Activated T-helper 2 cell treated with anti-CD3 and anti-CD28 coated beads, Interferon-gamma antibody, Interleukin-2, Interleukin-4, amounts not matched to agents 10 μg/mL and 5 μg/mL and 100 μg/mL, durations not matched to agents 14 hours and 24 hours and 36 hours (primary cell): ENCODE measurements at regions of chr20 and their contacts with region 1.

Region 1: DNA sequence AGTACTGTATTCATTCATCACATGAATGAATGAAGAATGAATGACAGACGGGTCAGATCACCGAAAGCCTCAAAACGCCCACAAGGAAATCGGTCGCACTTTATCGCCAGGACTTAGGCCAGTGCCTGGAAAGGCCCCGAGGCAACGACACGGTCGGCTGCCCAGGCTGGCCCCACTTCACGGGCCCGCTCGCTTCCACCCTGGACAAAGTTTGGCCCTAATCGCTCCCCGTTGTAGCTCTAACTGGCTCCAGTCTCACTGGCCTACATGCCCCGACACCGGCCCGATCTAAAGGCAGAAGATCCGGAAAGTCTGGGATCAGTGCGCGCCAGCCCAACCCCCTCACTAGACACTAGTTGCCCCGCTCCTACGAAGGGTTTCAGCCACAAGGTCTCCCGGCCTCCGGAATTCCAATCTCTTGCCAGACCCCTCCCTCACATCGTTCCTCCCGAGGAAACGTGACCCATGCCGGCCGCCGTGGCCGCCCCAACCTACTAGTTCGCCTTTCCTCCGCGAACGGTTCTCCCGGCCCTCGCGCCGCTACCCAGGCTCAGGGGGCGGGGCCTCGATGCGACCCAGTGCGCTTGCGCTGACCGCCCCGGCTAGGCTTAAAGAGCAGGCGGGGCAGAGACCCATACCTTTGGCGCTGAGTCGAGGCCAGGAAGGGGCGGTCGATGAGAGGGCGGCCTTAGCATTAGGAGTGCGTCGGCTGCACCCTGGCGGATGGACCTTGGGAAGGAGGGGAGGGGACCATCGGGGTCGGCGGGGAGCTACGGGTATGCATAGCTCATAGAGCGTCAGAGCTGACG is at the starts of genes GSS and MYH7B:
- DNase-seq: peak; percentile 96
- H3K4me3 Mint-ChIP-seq: peak within 1 kb of the TSS; percentile 97
- H3K27ac Mint-ChIP-seq: peak within 1 kb of the TSS; percentile 97
- H3K4me1 Mint-ChIP-seq: peaks cover 15% of the 10 kb centered on the region
- H3K27me3 Mint-ChIP-seq: no peaks in the 10 kb centered on the region
- total RNA-seq, gene GSS: 70.5 and 77.1 TPM in 2 replicates
- total RNA-seq, gene MYH7B: 0.30 and 0.34 TPM in 2 replicates

Region 2: GRCh38 chr20:34825530-34826362 is 129.7 kb before region 1 on chr20 and contains the start of gene NCOA6:
- intact Hi-C with region 1: loop called (anchors 2 kb)
- DNase-seq: peak; percentile 72
- H3K4me3 Mint-ChIP-seq: peak within 1 kb of the TSS; percentile 98
- H3K27ac Mint-ChIP-seq: peak within 1 kb of the TSS; percentile 94
- H3K4me1 Mint-ChIP-seq: peaks cover 29% of the 10 kb centered on the region
- H3K27me3 Mint-ChIP-seq: peaks cover 11% of the 10 kb centered on the region
- total RNA-seq, gene NCOA6: 29.1 and 30.9 TPM in 2 replicates

Region 3: DNA sequence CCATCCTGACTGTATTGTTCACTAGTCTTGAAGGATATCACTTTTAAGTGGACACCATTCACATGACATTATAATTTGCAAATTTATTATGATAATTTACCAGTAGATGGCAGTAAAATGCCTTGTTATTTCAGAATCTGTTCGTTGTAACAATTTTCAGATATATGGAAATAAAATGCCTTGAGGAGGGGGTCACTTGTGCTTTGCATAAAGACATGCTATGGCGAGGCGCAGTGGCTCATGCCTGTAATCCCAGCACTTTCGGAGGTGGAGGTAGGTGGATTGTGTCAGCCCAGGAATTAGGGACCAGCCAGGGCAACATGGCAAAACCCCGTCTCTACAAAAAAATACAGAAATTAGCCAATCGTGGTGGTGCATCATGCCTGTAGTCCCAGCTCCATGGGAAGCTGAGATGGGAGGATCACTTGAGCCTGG is 121.0 kb before region 1 on chr20:
- intact Hi-C with region 1: loop called (anchors 2 kb)
- DNase-seq: no peak
- H3K4me3 Mint-ChIP-seq: no peak overlapping the region
- H3K27ac Mint-ChIP-seq: no peak overlapping the region
- H3K4me1 Mint-ChIP-seq: peaks cover 4% of the 10 kb centered on the region
- H3K27me3 Mint-ChIP-seq: peaks cover 22% of the 10 kb centered on the region

Region 4: DNA sequence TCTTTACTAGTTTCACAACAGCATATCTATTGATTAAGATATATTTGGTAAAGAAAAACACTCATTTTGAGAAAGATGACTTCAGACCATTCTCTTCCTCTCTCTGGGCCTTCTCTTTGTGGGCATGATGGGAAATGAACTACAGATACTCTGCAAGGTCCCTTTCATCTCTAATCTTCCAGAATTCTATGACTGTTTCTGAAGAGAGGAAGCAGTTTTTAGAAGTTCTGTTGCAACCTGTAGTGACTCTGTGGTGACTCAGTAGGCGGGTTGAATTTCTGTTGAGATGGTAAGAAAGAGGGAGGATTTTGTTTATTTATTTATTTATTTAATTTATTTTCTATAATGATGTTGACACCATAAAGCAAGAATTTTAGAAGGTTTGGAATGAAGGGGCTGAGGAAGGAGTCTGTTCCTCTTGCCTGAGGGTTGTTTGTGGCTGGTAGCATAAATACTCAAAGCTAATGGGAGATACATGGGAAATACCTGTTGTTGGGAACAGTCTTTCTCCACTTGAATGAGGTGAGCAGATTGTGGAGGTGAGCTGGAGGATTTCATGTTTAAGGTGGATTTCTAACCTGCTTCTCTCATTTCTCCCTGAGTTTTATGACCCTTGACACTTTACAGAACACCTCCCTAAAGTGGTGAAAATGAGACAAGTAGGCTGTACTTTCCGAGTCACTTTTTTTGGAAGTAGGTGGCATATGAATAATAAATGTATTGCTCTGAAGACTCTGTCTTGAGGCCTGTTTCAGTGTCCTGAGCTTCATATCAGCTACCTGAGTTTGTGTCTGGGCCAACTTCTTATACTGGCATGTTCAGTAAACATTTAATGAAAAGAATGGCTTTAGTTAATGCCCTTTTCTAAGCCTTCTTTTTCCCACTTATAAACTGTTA is 64.0 kb before region 1 on chr20:
- intact Hi-C with region 1: loop called (anchors 1 kb)
- DNase-seq: no peak
- H3K4me3 Mint-ChIP-seq: peak overlapping the region; percentile 14
- H3K27ac Mint-ChIP-seq: peak overlapping the region; percentile 80
- H3K4me1 Mint-ChIP-seq: peaks cover 45% of the 10 kb centered on the region
- H3K27me3 Mint-ChIP-seq: no peaks in the 10 kb centered on the region

Region 5: DNA sequence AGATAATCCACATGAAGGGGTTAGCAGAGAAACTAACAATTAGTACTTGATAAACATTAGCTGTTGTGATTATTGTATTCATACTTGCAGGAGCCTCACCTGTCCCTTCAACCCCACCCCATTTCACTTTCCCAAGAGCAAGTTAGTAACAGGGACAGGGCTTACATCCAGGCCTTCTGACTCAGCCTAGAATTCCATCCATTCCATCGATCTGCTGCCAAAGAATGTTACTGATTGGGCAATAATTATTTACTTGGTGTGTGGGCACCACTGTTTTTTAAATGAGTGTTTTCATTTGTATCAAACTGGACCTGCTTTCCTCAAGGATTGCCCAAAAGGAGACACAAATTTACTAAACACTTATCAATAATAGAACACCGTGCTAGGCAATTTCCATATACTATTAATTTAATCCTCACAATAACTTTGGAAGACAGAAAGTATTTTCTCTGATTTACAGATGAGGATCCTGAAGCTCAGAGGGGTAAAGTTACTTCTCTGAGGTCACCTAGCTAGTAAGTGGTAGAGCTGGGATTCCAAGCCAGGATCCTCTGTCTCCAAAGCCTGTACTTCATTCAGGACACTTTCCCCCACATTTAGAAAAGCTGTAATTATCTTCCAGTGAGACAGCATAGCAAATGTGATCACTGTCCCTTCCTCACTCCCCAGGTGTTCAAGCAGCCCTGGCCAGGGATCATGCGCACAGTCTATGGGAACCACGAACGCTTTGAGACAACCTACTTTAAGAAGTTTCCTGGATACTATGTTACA is 32.6 kb before region 1 on chr20:
- intact Hi-C with region 1: loop called (anchors 2 kb)
- DNase-seq: no peak
- H3K4me3 Mint-ChIP-seq: no peak overlapping the region
- H3K27ac Mint-ChIP-seq: no peak overlapping the region
- H3K4me1 Mint-ChIP-seq: peaks cover 44% of the 10 kb centered on the region
- H3K27me3 Mint-ChIP-seq: no peaks in the 10 kb centered on the region

Region 6: GRCh38 chr20:34938502-34939163 is 16.8 kb before region 1 on chr20:
- intact Hi-C with region 1: no loop called
- DNase-seq: no peak
- H3K4me3 Mint-ChIP-seq: no peak overlapping the region
- H3K27ac Mint-ChIP-seq: no peak overlapping the region
- H3K4me1 Mint-ChIP-seq: no peaks in the 10 kb centered on the region
- H3K27me3 Mint-ChIP-seq: no peaks in the 10 kb centered on the region